Activated T-helper 1 cell treated with anti-CD3 and anti-CD28 coated beads, Interleukin-12 subunit alpha, Interleukin-12 subunit beta, Interleukin-2, Interleukin-4 antibody, amounts not matched to agents 30 ng/mL and 10 ng/mL and 1 ng/mL, durations not matched to agents 14 hours and 24 hours and 36 hours (primary cell): ENCODE measurements at regions of chr10 and their contacts with region 1.

Region 1: GRCh38 chr10:119199231-119199992 is 8.0 kb upstream of the GRK5 start:
- DNase-seq: peak; percentile 48
- H3K4me3 Mint-ChIP-seq: no peak overlapping the region
- H3K27ac Mint-ChIP-seq: no peak overlapping the region
- H3K4me1 Mint-ChIP-seq: peaks cover 34% of the 10 kb centered on the region
- H3K27me3 Mint-ChIP-seq: peaks cover 2% of the 10 kb centered on the region

Region 2: GRCh38 chr10:119120413-119120867 is 79.0 kb before region 1 on chr10:
- intact Hi-C with region 1: no loop called
- DNase-seq: no peak
- H3K4me3 Mint-ChIP-seq: no peak overlapping the region
- H3K27ac Mint-ChIP-seq: no peak overlapping the region
- H3K4me1 Mint-ChIP-seq: no peaks in the 10 kb centered on the region
- H3K27me3 Mint-ChIP-seq: no peaks in the 10 kb centered on the region

Region 3: GRCh38 chr10:119139464-119140067 is 59.8 kb before region 1 on chr10:
- intact Hi-C with region 1: loop called (anchors 2 kb)
- DNase-seq: peak; percentile 31
- H3K4me3 Mint-ChIP-seq: no peak overlapping the region
- H3K27ac Mint-ChIP-seq: peak overlapping the region; percentile 15
- H3K4me1 Mint-ChIP-seq: peaks cover 24% of the 10 kb centered on the region
- H3K27me3 Mint-ChIP-seq: no peaks in the 10 kb centered on the region

Region 4: GRCh38 chr10:119416855-119417254 is 217.4 kb after region 1 on chr10:
- intact Hi-C with region 1: loop called (anchors 1 kb)
- DNase-seq: peak; percentile 51
- H3K4me3 Mint-ChIP-seq: no peak overlapping the region
- H3K27ac Mint-ChIP-seq: no peak overlapping the region
- H3K4me1 Mint-ChIP-seq: no peaks in the 10 kb centered on the region
- H3K27me3 Mint-ChIP-seq: no peaks in the 10 kb centered on the region

Region 5: GRCh38 chr10:119445311-119445934 is 246.0 kb after region 1 on chr10:
- intact Hi-C with region 1: loop called (anchors 1 kb)
- DNase-seq: peak; percentile 71
- H3K4me3 Mint-ChIP-seq: no peak overlapping the region
- H3K27ac Mint-ChIP-seq: no peak overlapping the region
- H3K4me1 Mint-ChIP-seq: peaks cover 3% of the 10 kb centered on the region
- H3K27me3 Mint-ChIP-seq: no peaks in the 10 kb centered on the region

Region 6: DNA sequence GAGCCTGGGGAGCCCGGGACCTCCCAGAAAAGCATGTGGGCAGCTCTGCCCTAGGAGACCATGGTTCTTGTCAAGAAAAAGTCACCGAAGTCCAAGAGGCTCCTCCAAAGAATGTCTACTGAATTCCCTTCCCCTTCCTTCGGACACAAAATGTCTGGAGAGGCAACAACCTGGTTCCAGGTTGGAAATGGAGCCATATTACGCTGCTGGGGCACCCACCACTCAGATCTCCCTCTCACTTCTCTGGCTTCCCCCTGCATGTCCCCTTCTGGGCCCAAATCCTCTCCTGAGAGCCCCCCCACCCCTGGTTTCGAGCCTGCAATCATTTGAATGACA is 290.5 kb after region 1 on chr10:
- intact Hi-C with region 1: loop called (anchors 1 kb)
- DNase-seq: no peak
- H3K4me3 Mint-ChIP-seq: peak overlapping the region; percentile 34
- H3K27ac Mint-ChIP-seq: peak overlapping the region; percentile 89
- H3K4me1 Mint-ChIP-seq: peaks cover 38% of the 10 kb centered on the region
- H3K27me3 Mint-ChIP-seq: no peaks in the 10 kb centered on the region